RWPE1 (cell line): ENCODE measurements at regions of chr9 and their contacts with region 1.

Region 1: DNA sequence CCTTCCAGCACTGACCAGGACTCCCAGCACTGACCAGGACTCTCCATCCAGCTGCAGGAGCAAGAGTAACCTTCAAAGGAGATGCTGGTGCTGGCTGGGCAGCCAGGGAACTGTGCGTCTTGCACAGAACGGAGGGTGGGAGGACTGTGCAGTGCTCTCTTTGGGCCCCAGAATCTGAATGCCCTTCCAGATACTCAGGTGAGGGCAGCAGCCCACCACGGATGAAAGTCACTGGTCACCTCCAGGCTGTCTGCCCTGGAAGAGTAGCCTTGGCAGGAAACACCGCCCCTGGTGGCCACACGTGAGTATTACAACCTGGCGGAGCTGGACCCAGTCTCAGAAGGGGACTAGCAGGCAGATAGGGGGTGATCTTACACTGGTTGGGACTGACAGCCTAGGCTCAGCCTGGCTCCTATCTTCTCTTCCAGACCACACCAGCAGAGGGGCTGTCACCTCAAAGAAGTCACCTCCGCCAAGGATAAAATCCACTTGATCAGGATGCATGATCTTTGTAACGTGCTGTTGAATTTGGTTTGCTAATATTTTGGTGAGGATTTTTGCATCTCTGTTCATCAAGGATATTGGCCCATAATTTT is 4.8 kb upstream of the SARDH start:
- DNase-seq: peak; percentile 94
- H3K27ac ChIP-seq: no peak overlapping the region
- CTCF ChIP-seq: peak; percentile 100

Region 2: GRCh38 chr9:133726401-133727276 is 16.3 kb before region 1 on chr9:
- CTCF ChIA-PET with region 1: interaction called, 25 read pairs
- POLR2A ChIA-PET with region 1: no interaction called
- DNase-seq: peak; percentile 78
- H3K27ac ChIP-seq: no peak overlapping the region
- CTCF ChIP-seq: peak; percentile 59

Region 3: GRCh38 chr9:133731876-133732638 is 10.9 kb before region 1 on chr9:
- CTCF ChIA-PET with region 1: interaction called, 25 read pairs
- POLR2A ChIA-PET with region 1: no interaction called
- DNase-seq: peak; percentile 97
- H3K27ac ChIP-seq: no peak overlapping the region
- CTCF ChIP-seq: no peak

Region 4: GRCh38 chr9:133773889-133774655 is 31.1 kb after region 1 on chr9:
- CTCF ChIA-PET with region 1: interaction called, 11 read pairs
- POLR2A ChIA-PET with region 1: no interaction called
- DNase-seq: no peak
- H3K27ac ChIP-seq: no peak overlapping the region
- CTCF ChIP-seq: no peak